GM10248 (cell line): ENCODE measurements at regions of chr3 and their contacts with region 1.

Region 1: GRCh38 chr3:184196536-184196935 is 10.5 kb downstream of the ABCF3 start:
- DNase-seq: no peak
- CTCF ChIP-seq: no peak

Region 2: DNA sequence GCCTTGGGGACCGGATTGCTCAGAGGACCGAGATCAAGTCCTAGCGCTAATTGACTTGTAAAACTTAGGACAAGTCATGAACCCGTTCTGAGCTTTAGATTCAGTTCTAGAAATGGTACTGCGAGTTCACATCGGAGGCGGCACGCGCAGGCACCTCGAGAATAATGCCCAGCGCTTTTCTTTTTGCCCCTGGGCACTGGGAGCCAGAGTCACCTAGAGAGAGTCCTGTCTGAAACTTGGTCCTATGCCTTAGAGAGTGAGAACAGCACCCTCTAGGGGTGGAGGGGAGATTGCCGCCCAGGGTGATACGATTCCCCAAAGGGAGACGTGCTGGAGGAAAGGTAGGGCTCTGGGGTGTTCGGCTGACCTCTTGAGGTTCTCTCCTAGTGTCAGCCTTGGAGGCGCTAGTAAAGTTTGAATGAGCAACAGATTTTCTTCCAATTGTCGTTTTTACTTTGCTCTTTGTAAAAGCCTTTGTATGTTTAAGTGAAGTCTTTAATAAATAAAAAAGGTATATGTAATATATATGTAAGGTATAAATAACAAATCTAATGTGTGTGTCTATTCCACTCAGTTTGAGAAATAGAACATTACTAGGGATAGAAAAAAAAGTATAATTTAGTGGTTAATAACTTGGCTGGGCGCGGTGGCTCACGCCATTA is 53.8 kb after region 1 on chr3:
- CTCF ChIA-PET with region 1: interaction called, 7 read pairs
- POLR2A ChIA-PET with region 1: interaction called, 10 read pairs
- DNase-seq: peak; percentile 91
- CTCF ChIP-seq: peak; percentile 95